ENCODE measurements at regions of chr1 and their contacts with region 1.

Region 1: DNA sequence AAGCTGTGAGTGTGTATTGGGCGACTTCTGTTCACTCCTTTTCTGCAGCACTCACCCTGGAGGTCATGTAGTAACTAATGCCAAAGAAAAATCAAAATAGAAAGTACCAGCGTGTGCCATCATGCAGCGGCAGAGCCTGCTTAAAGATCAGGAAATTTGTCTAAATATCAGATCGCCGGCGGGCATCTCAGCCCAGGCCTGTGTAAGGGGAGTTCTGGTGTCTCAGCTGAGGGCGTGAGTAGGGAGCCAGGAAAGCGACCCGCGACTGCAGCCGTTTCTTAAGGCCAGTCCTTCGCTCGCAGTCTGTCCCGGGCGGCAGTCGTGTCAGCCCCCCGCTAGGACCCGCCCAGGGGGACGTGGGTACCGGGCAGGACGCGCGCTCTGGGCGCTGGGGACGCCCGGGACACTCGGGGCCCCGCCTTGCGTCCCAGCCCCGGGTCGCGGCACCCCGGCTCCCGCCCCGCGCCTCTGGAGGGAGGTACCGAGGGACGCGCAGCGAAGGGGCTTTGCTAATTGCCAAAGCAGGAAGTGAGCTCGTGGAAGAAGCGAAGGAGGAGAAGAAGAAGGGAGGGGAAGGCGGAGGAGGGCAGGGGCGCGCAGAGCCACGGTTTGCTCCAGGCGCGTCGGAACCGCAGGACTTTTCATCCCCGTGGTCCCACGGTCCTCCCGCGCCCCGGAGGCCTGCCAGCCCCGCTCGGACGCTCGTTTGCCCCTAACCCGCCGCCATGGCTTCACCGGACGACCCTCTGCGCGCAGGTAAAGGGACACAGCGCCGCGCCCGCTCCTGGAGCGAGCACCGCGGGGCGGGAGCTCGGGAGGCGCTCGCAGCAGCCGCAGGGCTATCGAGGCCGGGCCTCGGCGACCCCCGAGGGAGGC is 1.1 kb downstream of the EDARADD start:
- DNase-seq: peak; percentile 55 to 65
- H3K4me3 ChIP-seq: peak overlapping the region; percentile 82
- H3K4me3 Mint-ChIP-seq: peak overlapping the region; percentile 85
- H3K27ac Mint-ChIP-seq: peak overlapping the region; percentile 74
- H3K4me1 ChIP-seq: peaks cover 30% of the 10 kb centered on the region
- H3K4me1 Mint-ChIP-seq: peaks cover 23% of the 10 kb centered on the region
- H3K27me3 ChIP-seq: no peaks in the 10 kb centered on the region
- H3K27me3 Mint-ChIP-seq: no peaks in the 10 kb centered on the region
- CTCF ChIP-seq: no peak

Region 2: DNA sequence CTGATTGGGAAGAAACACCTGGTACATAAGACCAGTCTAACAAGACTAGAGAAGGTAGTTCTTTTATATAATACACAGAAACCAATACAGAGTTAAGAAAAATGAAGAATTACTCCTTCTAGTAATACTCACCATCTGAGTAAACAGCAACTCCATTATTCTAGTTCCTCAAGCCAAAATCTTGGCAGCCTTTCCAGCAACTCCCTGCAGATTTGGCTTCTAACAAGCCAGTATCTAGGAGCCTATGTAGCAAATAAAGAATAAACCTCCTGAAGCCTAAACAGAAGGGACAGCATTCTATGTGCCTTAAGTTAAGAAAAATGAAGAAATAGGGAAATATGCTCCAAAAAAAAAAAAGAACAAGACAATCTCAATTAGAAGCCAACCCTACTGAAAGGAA is 137.9 kb before region 1 on chr1:
- CTCF ChIA-PET with region 1: no interaction called
- POLR2A ChIA-PET with region 1: no interaction called
- intact Hi-C with region 1: no loop called
- DNase-seq: no peak
- H3K4me3 ChIP-seq: no peak overlapping the region
- H3K4me3 Mint-ChIP-seq: no peak overlapping the region
- H3K27ac Mint-ChIP-seq: no peak overlapping the region
- H3K4me1 ChIP-seq: 0 out of 2 replicates have a peak, but pooled peaks cover 4% of the 10 kb centered on the region
- H3K4me1 Mint-ChIP-seq: peaks cover 14% of the 10 kb centered on the region
- H3K27me3 ChIP-seq: no peaks in the 10 kb centered on the region; the same call in 1 of the 2 replicates
- H3K27me3 Mint-ChIP-seq: peaks cover 3% of the 10 kb centered on the region
- CTCF ChIP-seq: no peak

Region 3: DNA sequence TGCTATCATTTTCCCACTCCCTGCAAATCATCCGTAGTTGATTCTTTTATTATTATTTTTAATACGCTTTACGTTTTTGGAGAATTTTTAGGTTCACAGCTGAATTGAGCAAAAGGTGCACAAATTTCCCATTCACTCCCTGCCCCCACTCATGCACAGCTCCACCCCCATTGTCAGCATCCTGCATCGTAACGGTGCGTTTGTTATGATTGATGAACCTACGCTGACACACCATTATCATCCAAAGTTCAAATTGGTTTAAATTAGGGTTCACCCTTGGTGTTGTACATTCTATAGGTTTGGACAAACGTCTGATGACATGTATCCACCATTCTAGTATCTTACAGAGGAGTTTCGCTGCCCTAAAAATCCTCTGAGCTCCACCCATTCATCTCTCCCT is 43.5 kb after region 1 on chr1:
- CTCF ChIA-PET with region 1: no interaction called
- POLR2A ChIA-PET with region 1: no interaction called
- intact Hi-C with region 1: loop called (anchors 1 kb)
- DNase-seq: no peak
- H3K4me3 ChIP-seq: no peak overlapping the region
- H3K4me3 Mint-ChIP-seq: no peak overlapping the region
- H3K27ac Mint-ChIP-seq: no peak overlapping the region
- H3K4me1 ChIP-seq: peaks cover 10% of the 10 kb centered on the region
- H3K4me1 Mint-ChIP-seq: peaks cover 8% of the 10 kb centered on the region
- H3K27me3 ChIP-seq: no peaks in the 10 kb centered on the region; the same call in 1 of the 2 replicates
- H3K27me3 Mint-ChIP-seq: no peaks in the 10 kb centered on the region
- CTCF ChIP-seq: no peak

Region 4: DNA sequence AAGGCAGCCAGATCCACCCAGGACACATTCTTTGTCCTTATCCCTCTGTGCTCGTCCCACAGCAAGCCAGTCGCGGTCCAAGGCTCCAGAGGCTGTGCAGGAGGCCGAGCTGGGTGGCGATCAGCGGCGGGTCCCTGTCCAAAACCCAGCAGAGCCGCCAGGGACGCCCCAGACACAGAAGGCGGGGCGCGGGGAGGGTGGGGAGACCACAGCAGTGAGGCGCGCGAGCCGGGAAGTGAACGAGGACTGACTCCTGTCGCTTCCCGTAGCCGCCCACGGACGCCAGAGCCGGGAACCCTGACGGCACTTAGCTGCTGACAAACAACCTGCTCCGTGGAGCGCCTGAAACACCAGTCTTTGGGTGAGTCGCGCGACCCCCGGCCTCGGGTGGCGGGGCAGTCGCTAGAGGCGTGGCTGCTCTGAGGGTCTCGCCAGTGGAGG is 128.6 kb after region 1 on chr1 and contains the start of gene LGALS8:
- CTCF ChIA-PET with region 1: no interaction called
- POLR2A ChIA-PET with region 1: no interaction called
- intact Hi-C with region 1: loop called (anchors 5 kb)
- DNase-seq: peak; percentile 74 to 79
- H3K4me3 ChIP-seq: peak within 1 kb of the TSS; percentile 98
- H3K4me3 Mint-ChIP-seq: peak within 1 kb of the TSS; percentile 98
- H3K27ac Mint-ChIP-seq: peak within 1 kb of the TSS; percentile 98
- H3K4me1 ChIP-seq: peaks cover 8% of the 10 kb centered on the region
- H3K4me1 Mint-ChIP-seq: peaks cover 26% of the 10 kb centered on the region
- H3K27me3 ChIP-seq: no peaks in the 10 kb centered on the region
- H3K27me3 Mint-ChIP-seq: no peaks in the 10 kb centered on the region
- CTCF ChIP-seq: no peak
- total RNA-seq, gene LGALS8: 67.4 and 72.3 TPM in 2 replicates

Measured in Caco-2 (cell line).